ENCODE measurements at regions of chr4 and their contacts with region 1.

Region 1: DNA sequence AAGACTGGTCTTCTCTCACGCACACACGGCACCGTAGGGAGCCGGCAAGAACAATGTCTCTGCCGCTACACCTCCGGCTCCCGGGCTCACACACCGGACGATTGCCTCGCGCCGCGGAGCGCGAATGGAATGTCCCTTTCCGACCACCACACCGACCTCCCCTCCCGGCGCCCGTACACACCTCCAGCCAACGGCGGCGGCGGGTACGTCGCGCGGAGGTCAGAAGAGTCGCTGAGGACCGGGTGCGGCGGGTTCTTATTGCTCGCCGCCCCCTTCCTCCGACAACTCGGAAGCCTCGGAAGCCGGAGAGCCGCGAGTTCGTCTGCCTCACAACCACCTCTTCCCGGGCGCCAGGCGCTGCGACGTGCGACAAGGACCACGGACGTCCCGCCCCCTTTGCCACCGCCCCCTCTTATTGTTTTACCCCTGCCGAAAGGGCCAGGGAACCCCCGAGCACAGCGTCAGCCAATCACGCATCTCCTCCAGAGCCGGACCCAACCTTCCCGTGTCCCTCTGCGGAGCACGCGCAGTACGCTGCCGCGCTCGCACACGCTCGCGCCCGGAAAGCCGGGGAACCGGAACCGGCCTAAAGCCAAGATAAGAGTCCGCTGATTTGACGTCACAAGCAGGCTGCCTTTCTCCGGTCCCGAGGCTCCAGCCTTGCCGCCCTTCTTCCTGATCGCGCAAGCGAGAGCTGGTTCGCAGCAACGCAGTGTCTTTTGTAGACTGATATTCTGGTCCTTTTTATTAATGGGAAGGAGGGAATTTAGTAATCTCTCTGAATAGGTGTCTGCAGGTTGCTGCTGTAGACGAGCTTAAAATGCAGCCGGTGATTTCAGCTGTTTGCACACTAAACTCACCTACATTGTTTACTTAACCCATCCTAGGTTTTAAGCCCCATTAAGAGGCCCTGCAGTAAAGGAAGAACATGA is at the start of gene G3BP2:
- DNase-seq: peak; percentile 97
- H3K4me3 Mint-ChIP-seq: peak within 1 kb of the TSS; percentile 99
- H3K27ac Mint-ChIP-seq: peak within 1 kb of the TSS; percentile 99
- H3K4me1 Mint-ChIP-seq: peaks cover 40% of the 10 kb centered on the region
- H3K27me3 Mint-ChIP-seq: no peaks in the 10 kb centered on the region
- total RNA-seq, gene G3BP2: 143 and 156 TPM in 2 replicates

Region 2: DNA sequence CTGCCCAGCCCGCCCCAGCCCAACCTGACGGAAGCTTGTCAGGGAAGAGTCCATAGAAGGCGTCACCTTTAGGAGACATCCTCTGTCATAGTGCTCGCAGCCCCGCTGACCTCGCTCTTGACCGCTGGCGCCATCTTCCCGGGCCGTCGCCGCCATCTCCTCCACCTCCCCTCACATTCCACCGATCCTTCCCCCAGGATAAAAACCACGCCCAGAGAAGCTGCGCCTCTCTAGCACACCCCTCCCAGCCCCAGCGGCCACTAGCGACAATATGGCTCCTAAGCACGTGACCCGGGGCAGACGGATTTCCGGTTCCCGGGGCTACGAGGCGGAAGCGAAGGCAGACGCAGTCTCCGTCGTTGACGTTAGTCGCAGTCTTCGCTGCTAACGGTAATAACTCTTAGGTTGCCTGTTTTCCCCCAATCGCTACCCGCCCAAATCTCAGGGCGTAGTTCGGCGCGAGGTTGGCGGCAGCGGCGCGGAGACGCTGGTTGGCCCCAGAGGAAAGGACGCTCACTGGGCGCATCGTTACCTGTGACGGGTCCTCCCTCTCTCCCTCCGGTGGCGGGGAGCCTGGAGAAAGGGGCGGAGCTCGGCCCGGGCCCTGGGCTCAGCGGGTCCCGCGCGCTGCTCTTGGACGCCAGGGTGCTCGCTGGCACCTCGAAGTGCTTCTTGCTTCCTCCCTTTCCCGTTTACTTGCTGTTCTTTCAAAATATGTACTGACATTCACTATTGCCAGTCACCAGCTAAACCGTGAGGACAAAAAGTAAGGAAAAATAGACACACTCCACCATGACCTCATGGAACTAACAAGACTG is 159.0 kb before region 1 on chr4 and contains the starts of genes RCHY1 and THAP6:
- intact Hi-C with region 1: loop called (anchors 2 kb)
- DNase-seq: peak; percentile 91
- H3K4me3 Mint-ChIP-seq: no peak within 1 kb of the TSS
- H3K27ac Mint-ChIP-seq: peak within 1 kb of the TSS; percentile 98
- H3K4me1 Mint-ChIP-seq: peaks cover 35% of the 10 kb centered on the region
- H3K27me3 Mint-ChIP-seq: no peaks in the 10 kb centered on the region
- total RNA-seq, gene RCHY1: 22.9 and 25.4 TPM in 2 replicates
- total RNA-seq, gene THAP6: 17.6 and 18.4 TPM in 2 replicates

Region 3: GRCh38 chr4:75630174-75630936 is 42.9 kb before region 1 on chr4 and contains the start of gene CDKL2:
- intact Hi-C with region 1: loop called (anchors 1 kb)
- DNase-seq: peak; percentile 87
- H3K4me3 Mint-ChIP-seq: peak within 1 kb of the TSS; percentile 82
- H3K27ac Mint-ChIP-seq: peak within 1 kb of the TSS; percentile 56
- H3K4me1 Mint-ChIP-seq: peaks cover 12% of the 10 kb centered on the region
- H3K27me3 Mint-ChIP-seq: peaks cover 6% of the 10 kb centered on the region
- total RNA-seq, gene CDKL2: 0.23 and 0.57 TPM in 2 replicates

Region 4: GRCh38 chr4:75653845-75654503 is 19.3 kb before region 1 on chr4:
- intact Hi-C with region 1: loop called (anchors 1 kb)
- DNase-seq: no peak
- H3K4me3 Mint-ChIP-seq: peak overlapping the region; percentile 64
- H3K27ac Mint-ChIP-seq: peak overlapping the region; percentile 89
- H3K4me1 Mint-ChIP-seq: peaks cover 53% of the 10 kb centered on the region
- H3K27me3 Mint-ChIP-seq: no peaks in the 10 kb centered on the region

Region 5: DNA sequence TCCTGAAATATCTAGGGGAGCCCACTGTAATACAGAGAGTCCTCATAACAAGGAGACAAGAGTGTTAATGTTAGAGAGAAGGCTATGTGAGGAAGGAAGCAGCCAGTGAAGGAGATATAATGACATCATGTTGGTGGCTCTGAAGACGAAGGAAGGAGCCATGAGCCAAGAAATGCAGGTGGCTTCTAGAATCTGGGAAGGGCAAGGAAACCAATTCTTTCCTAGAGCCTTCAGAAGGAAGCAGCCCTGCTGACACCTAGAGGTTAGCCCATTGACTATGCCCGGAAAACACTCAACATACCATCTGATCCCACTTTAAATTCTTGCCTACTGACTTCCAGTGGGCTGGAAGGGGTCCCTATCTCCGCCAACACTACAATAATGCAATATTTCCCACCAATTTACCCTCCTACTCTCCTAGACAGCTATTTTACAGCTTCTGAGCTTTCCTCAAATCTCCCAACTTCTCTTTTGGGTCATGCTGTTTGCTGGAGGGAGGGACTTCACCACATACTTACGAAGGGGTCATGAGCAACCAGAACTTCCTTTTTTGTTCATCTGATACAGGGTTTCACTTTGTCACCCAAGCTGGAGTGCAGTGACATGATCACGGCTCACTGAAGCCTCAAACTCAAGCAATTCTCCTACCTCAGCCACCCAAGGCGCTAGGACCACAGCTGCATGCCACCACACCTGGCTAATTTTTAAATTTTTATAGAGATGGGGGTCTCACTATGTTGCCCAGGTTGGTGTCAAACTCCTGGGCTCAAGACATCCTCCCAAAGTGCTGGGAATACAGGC is 25.1 kb after region 1 on chr4:
- intact Hi-C with region 1: loop called (anchors 2 kb)
- DNase-seq: no peak
- H3K4me3 Mint-ChIP-seq: no peak overlapping the region
- H3K27ac Mint-ChIP-seq: peak overlapping the region; percentile 78
- H3K4me1 Mint-ChIP-seq: peaks cover 23% of the 10 kb centered on the region
- H3K27me3 Mint-ChIP-seq: no peaks in the 10 kb centered on the region

Region 6: DNA sequence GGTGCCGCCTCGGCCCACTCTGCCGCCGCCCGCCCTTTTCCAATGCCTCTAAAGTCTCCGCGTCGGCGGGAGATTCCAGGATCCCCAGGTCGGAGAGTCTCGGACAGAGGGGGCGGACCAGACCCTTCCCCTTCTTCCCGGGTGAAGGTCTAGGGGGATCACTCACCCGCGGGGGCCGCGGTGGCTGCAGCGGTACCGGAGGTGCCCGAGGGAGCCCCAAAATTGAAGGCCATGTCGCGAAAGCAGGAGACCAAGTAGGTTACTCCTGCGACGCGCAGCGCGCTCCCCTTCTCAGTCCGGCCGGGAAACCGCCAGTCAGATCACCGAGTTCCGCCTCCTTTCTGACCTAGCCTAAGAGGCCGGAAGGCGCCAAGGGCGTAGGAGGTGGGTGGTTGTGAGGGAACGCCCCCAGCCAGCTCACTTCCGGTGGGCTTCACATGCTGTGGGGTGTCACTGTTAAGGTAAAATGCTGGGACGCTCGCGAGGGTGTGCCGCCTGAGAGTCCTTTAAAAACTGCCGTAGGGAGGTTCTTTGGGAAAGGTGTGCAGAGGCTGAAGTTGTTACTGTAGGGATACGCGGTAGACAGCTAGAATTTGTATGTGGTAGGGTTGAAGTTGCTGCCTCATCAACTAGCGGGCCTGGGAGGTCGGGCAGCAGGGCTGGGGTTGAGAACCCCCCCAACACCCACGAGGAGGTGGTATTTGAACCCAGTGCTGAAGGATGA is 475.0 kb after region 1 on chr4 and contains the start of gene NUP54:
- intact Hi-C with region 1: loop called (anchors 2 kb)
- DNase-seq: peak; percentile 94
- H3K4me3 Mint-ChIP-seq: peak within 1 kb of the TSS; percentile 89
- H3K27ac Mint-ChIP-seq: peak within 1 kb of the TSS; percentile 94
- H3K4me1 Mint-ChIP-seq: peaks cover 23% of the 10 kb centered on the region
- H3K27me3 Mint-ChIP-seq: no peaks in the 10 kb centered on the region
- total RNA-seq, gene NUP54: 74.7 and 75.6 TPM in 2 replicates